WTC11 (cell line): ENCODE measurements at regions of chr4 and their contacts with region 1.

Region 1: DNA sequence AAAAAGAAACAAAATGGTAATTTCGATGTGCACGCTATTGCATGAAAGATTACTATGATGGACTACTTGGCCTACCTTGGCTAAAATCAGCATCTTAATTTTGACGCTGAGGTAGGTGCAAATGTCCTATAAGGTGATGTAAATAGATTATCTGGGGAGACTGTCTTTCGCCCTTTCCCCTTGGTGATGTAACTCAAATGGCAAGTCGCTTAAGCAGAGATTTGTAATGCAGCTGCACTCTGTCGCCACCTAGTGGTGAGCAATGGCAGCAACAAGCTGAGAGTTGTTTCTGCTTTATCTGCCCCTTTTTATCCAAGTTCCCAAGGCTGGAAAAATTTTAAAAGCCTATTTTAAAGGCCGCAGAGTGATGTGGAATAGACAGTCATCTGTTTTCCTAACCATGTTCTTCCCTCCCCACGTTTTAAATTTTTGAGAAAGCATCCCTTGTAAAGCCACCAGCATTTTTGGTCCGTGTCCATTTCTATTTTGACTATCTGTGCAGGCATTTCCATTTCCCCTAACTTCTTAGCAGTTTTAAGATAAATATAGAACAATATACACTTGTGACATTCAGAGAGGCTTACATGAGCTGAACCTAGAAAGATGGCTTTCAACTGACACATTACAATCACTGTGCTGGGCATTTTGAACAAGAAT is 62.4 kb upstream of the PDLIM3 start:
- DNase-seq: peak; percentile 75
- ATAC-seq: peak; percentile 62
- H3K4me3 Mint-ChIP-seq: no peak overlapping the region
- H3K27ac Mint-ChIP-seq: no peak overlapping the region
- H3K4me1 Mint-ChIP-seq: peaks cover 8% of the 10 kb centered on the region
- H3K27me3 Mint-ChIP-seq: no peaks in the 10 kb centered on the region
- CTCF ChIP-seq: peak; percentile 98

Region 2: GRCh38 chr4:185479507-185479971 is 118.1 kb before region 1 on chr4:
- CTCF ChIA-PET with region 1: interaction called, 10 read pairs
- POLR2A ChIA-PET with region 1: no interaction called
- DNase-seq: no peak
- ATAC-seq: no peak
- H3K4me3 Mint-ChIP-seq: no peak overlapping the region
- H3K27ac Mint-ChIP-seq: no peak overlapping the region
- H3K4me1 Mint-ChIP-seq: peaks cover 6% of the 10 kb centered on the region
- H3K27me3 Mint-ChIP-seq: peaks cover 86% of the 10 kb centered on the region
- CTCF ChIP-seq: no peak

Region 3: GRCh38 chr4:185587427-185588161 is 10.1 kb before region 1 on chr4:
- CTCF ChIA-PET with region 1: interaction called, 24 read pairs
- POLR2A ChIA-PET with region 1: no interaction called
- DNase-seq: peak; percentile 80
- ATAC-seq: peak; percentile 89
- H3K4me3 Mint-ChIP-seq: peak overlapping the region; percentile 52
- H3K27ac Mint-ChIP-seq: peak overlapping the region; percentile 89
- H3K4me1 Mint-ChIP-seq: peaks cover 60% of the 10 kb centered on the region
- H3K27me3 Mint-ChIP-seq: peaks cover 47% of the 10 kb centered on the region
- CTCF ChIP-seq: no peak

Region 4: GRCh38 chr4:185656467-185656931 is 58.8 kb after region 1 on chr4:
- CTCF ChIA-PET with region 1: no interaction called
- POLR2A ChIA-PET with region 1: no interaction called
- DNase-seq: peak; percentile 47
- ATAC-seq: peak; percentile 60
- H3K4me3 Mint-ChIP-seq: no peak overlapping the region
- H3K27ac Mint-ChIP-seq: peak overlapping the region; percentile 94
- H3K4me1 Mint-ChIP-seq: peaks cover 60% of the 10 kb centered on the region
- H3K27me3 Mint-ChIP-seq: no peaks in the 10 kb centered on the region
- CTCF ChIP-seq: no peak

Region 5: GRCh38 chr4:186021461-186022167 is 424.0 kb after region 1 on chr4:
- CTCF ChIA-PET with region 1: interaction called, 12 read pairs
- POLR2A ChIA-PET with region 1: no interaction called
- DNase-seq: peak; percentile 73
- ATAC-seq: peak; percentile 97
- H3K4me3 Mint-ChIP-seq: no peak overlapping the region
- H3K27ac Mint-ChIP-seq: no peak overlapping the region
- H3K4me1 Mint-ChIP-seq: peaks cover 35% of the 10 kb centered on the region
- H3K27me3 Mint-ChIP-seq: peaks cover 7% of the 10 kb centered on the region
- CTCF ChIP-seq: peak; percentile 58

Region 6: DNA sequence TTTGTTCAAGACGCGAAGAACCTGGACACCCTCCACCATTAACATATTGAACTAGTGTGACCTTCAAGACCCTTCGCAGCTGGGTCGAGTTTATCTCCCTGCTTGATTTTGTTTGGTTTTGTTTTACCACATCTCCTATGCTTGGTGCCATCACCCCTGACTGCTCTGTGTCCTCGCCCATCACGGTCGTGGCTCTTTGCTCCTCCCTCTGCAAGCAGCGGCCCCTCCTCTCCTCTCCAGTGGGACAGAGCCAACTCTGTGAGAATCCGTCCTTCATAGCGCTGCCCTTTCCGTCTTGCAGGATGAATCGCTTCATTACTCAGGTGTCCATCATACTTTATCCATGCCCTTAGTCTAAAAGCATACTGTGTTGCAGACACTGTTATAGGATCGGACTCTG is 497.7 kb after region 1 on chr4:
- CTCF ChIA-PET with region 1: no interaction called
- POLR2A ChIA-PET with region 1: no interaction called
- DNase-seq: no peak
- ATAC-seq: peak; percentile 69
- H3K4me3 Mint-ChIP-seq: no peak overlapping the region
- H3K27ac Mint-ChIP-seq: no peak overlapping the region
- H3K4me1 Mint-ChIP-seq: peaks cover 15% of the 10 kb centered on the region
- H3K27me3 Mint-ChIP-seq: no peaks in the 10 kb centered on the region
- CTCF ChIP-seq: no peak